ENCODE measurements at regions of chr19 and their contacts with region 1.

Region 1: GRCh38 chr19:13007292-13008045 is 12.2 kb downstream of the NFIX start:
- DNase-seq: peak; percentile 91
- H3K4me3 ChIP-seq: peak overlapping the region in 3 of 4 donors; percentile 15 to 28 (median 16)
- H3K27ac ChIP-seq: peak overlapping the region; percentile 80 to 98 (median 95)
- H3K4me1 ChIP-seq: peaks cover 0 to 100% (median 99%) of the 10 kb centered on the region in 4 donors
- H3K27me3 ChIP-seq: no peaks in the 10 kb centered on the region
- CTCF ChIP-seq: no peak
- EP300 ChIP-seq: peak in 1 of 4 donors; percentile 31
- POLR2A ChIP-seq: no peak

Region 2: DNA sequence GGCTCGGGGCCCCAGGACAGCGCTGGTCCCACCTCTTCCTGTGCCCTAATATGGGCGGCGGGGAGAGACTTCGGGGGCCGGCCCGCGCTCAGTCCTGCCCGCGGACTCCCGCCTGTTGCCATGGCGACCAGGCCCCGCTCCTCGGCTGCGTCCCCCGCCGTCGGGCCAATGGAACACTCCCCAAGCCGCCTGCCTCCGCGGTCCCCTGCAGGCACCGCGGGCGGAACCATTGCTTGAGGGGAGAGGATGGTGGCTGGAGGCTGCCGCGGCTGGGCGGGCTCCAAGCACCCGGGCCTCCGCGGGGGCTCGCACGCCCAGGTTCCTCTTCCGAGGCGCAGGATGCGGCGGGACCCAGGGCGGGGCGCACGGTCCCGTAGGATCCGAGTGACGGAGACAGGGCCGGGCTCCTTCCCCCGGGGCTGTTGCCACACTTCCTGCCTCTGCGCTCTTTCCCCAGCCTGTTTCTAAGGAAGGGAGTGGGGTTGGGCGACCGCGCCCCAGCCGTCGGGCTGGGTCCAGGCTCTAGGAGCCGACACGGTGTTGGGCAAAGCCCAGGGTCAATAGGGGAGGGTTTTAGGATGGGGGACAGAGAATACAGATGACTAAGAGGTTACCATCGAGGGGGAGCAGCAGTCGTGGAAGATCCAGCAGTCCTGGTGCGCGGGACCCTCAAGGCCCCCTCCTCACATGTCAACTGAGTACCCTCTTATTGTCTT is 217.4 kb before region 1 on chr19:
- intact Hi-C with region 1: loop called (anchors 5 kb)
- DNase-seq: peak; percentile 99
- H3K4me3 ChIP-seq: peak overlapping the region; percentile 72 to 99 (median 90)
- H3K27ac ChIP-seq: peak overlapping the region; percentile 97 to 100 (median 98)
- H3K4me1 ChIP-seq: peaks cover 0 to 58% (median 55%) of the 10 kb centered on the region in 4 donors
- H3K27me3 ChIP-seq: no peaks in the 10 kb centered on the region
- CTCF ChIP-seq: no peak
- EP300 ChIP-seq: peak in 2 of 4 donors; percentile 56 to 84
- POLR2A ChIP-seq: peak; percentile 96 to 97

Region 3: GRCh38 chr19:12983542-12984142 is 23.8 kb before region 1 on chr19:
- intact Hi-C with region 1: no loop called
- DNase-seq: peak; percentile 91
- H3K4me3 ChIP-seq: peak overlapping the region in 3 of 4 donors; percentile 32 to 38 (median 38)
- H3K27ac ChIP-seq: peak overlapping the region in 2 of 4 donors; percentile 37 to 51
- H3K4me1 ChIP-seq: peaks cover 0 to 9% (median 7%) of the 10 kb centered on the region in 4 donors
- H3K27me3 ChIP-seq: no peaks in the 10 kb centered on the region
- CTCF ChIP-seq: peak; percentile 89 to 96 (median 94)
- EP300 ChIP-seq: no peak
- POLR2A ChIP-seq: no peak

Region 4: GRCh38 chr19:13022859-13023636 is 15.6 kb after region 1 on chr19:
- intact Hi-C with region 1: loop called (anchors 2 kb)
- DNase-seq: peak; percentile 97
- H3K4me3 ChIP-seq: peak overlapping the region; percentile 31 to 49 (median 41)
- H3K27ac ChIP-seq: peak overlapping the region; percentile 91 to 98 (median 95)
- H3K4me1 ChIP-seq: peaks cover 0 to 97% (median 89%) of the 10 kb centered on the region in 4 donors
- H3K27me3 ChIP-seq: no peaks in the 10 kb centered on the region
- CTCF ChIP-seq: peak in 2 of 4 experiments; percentile 17 to 24
- EP300 ChIP-seq: peak in 1 of 4 donors; percentile 35
- POLR2A ChIP-seq: no peak